Activated CD8-positive, alpha-beta T cell treated with anti-CD3 and anti-CD28 coated beads for 36 hours (primary cell): ENCODE measurements at regions of chr2 and their contacts with region 1.

Region 1: GRCh38 chr2:68909793-68910674 is 38.8 kb upstream of the BMP10 start:
- DNase-seq: peak; percentile 92
- ATAC-seq: peak; percentile 45
- H3K4me3 Mint-ChIP-seq: no peak overlapping the region
- H3K27ac Mint-ChIP-seq: peak overlapping the region; percentile 60
- H3K4me1 Mint-ChIP-seq: peaks cover 35% of the 10 kb centered on the region
- H3K27me3 Mint-ChIP-seq: no peaks in the 10 kb centered on the region
- CTCF ChIP-seq: peak; percentile 91

Region 2: DNA sequence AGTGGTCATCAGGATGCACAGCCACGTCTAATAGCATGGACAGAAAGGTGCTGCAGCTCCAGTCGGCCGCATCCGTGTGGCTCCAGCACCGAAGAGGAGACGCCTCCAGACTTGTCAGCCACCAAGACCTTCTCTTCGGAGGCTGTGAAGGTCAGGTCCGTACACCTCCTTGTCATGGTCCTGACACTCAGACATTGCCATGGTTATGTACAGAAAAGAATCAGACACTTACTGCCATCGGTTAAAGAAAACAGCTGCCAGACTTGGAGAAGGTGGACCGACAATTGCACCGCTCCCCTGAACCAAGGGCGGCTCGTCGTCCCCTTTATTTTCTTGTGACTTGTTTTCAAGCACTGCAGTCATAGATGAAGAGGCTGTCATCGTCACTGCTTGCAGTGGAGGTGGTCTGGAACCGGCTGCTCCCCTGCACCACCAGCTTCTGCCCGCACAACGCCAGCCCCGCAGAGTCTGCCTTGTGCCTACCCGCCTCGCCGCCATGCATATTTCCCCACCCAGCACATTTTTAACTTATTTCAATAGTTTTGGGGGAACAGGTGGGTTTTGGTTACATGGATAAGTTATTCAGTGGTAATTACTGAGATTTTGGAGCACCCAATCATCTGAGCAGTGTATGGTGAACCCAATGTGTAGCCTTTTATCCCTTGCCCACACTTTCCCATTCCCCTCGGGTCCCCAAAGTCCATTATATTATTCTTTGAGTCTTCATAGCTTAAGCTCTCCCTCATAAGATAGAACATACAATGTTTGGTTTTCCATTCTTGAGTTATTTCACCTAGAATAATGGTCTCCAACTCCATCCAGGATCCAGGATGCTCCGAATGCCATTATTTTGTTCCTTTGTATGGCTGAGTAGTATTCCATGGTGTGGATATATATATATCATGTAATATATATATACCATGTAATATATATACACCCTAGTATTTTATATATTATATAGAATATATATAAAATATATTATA is 461.1 kb before region 1 on chr2:
- CTCF ChIA-PET with region 1: no interaction called
- POLR2A ChIA-PET with region 1: no interaction called
- intact Hi-C with region 1: no loop called
- DNase-seq: peak; percentile 40
- ATAC-seq: peak; percentile 65
- H3K4me3 Mint-ChIP-seq: no peak overlapping the region
- H3K27ac Mint-ChIP-seq: no peak overlapping the region
- H3K4me1 Mint-ChIP-seq: peaks cover 10% of the 10 kb centered on the region
- H3K27me3 Mint-ChIP-seq: no peaks in the 10 kb centered on the region
- CTCF ChIP-seq: no peak

Region 3: GRCh38 chr2:68487773-68488355 is 422.2 kb before region 1 on chr2:
- CTCF ChIA-PET with region 1: interaction called, 12 read pairs
- POLR2A ChIA-PET with region 1: no interaction called
- intact Hi-C with region 1: loop called (anchors 5 kb)
- DNase-seq: no peak
- ATAC-seq: peak; percentile 60
- H3K4me3 Mint-ChIP-seq: no peak overlapping the region
- H3K27ac Mint-ChIP-seq: no peak overlapping the region
- H3K4me1 Mint-ChIP-seq: peaks cover 5% of the 10 kb centered on the region
- H3K27me3 Mint-ChIP-seq: no peaks in the 10 kb centered on the region
- CTCF ChIP-seq: peak; percentile 72

Region 4: GRCh38 chr2:68734688-68735525 is 175.1 kb before region 1 on chr2 and contains the start of gene ARHGAP25:
- CTCF ChIA-PET with region 1: interaction called, 37 read pairs
- POLR2A ChIA-PET with region 1: interaction called, 8 read pairs
- intact Hi-C with region 1: no loop called
- DNase-seq: peak; percentile 81
- ATAC-seq: peak; percentile 72
- H3K4me3 Mint-ChIP-seq: no peak within 1 kb of the TSS
- H3K27ac Mint-ChIP-seq: no peak within 1 kb of the TSS
- H3K4me1 Mint-ChIP-seq: peaks cover 30% of the 10 kb centered on the region
- H3K27me3 Mint-ChIP-seq: no peaks in the 10 kb centered on the region
- CTCF ChIP-seq: no peak
- total RNA-seq, gene ARHGAP25: 59.3 to 61.5 TPM

Region 5: DNA sequence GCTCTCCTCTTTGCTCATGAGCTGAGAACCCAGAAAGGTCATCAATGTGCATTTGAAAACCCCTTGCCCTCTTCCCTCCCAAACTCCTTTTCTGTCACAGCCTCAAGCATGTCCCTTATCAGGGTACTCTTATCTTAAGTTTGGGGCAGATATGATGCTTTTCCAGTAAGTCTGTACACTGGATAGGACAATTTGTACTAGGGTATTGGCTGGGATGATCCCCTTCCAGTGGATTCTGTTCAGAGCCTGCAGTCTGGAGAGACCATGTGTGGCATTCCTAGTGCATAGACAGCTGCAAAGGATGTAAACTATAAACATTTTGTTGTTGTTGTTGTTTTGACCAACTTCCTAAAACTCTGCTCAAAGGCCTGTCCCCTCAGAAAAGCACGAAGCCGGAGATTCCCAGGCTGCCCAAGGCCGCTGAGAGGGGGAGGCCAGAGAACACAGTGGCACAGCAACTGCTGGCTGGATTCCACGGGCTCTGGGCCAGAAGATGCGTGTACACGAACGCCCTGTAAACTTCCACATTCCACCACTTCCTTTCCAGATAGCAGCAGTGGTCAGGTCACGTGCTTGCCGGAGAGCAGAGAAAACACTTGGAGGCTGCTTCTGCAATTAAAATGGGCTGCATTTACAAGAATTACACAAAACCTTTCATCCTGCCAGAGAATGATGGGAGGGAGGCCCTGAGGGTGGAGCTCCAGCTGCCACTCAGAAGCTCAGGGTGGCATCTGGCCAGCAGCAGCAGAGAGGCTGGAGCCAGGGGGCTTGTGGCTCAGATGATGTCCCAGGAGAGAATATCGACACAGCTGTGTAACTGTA is 80.9 kb before region 1 on chr2:
- CTCF ChIA-PET with region 1: no interaction called
- POLR2A ChIA-PET with region 1: interaction called, 3 read pairs
- intact Hi-C with region 1: loop called (anchors 5 kb)
- DNase-seq: peak; percentile 75
- ATAC-seq: peak; percentile 22
- H3K4me3 Mint-ChIP-seq: peak overlapping the region; percentile 42
- H3K27ac Mint-ChIP-seq: peak overlapping the region; percentile 87
- H3K4me1 Mint-ChIP-seq: peaks cover 71% of the 10 kb centered on the region
- H3K27me3 Mint-ChIP-seq: no peaks in the 10 kb centered on the region
- CTCF ChIP-seq: no peak

Region 6: GRCh38 chr2:68943581-68944568 is 33.8 kb after region 1 on chr2:
- CTCF ChIA-PET with region 1: interaction called, 14 read pairs
- POLR2A ChIA-PET with region 1: no interaction called
- intact Hi-C with region 1: no loop called
- DNase-seq: peak; percentile 63
- ATAC-seq: peak; percentile 87
- H3K4me3 Mint-ChIP-seq: no peak overlapping the region
- H3K27ac Mint-ChIP-seq: no peak overlapping the region
- H3K4me1 Mint-ChIP-seq: no peaks in the 10 kb centered on the region
- H3K27me3 Mint-ChIP-seq: peaks cover 21% of the 10 kb centered on the region
- CTCF ChIP-seq: peak; percentile 87